GM13977 (cell line): ENCODE measurements at regions of chr15 and their contacts with region 1.

Region 1: DNA sequence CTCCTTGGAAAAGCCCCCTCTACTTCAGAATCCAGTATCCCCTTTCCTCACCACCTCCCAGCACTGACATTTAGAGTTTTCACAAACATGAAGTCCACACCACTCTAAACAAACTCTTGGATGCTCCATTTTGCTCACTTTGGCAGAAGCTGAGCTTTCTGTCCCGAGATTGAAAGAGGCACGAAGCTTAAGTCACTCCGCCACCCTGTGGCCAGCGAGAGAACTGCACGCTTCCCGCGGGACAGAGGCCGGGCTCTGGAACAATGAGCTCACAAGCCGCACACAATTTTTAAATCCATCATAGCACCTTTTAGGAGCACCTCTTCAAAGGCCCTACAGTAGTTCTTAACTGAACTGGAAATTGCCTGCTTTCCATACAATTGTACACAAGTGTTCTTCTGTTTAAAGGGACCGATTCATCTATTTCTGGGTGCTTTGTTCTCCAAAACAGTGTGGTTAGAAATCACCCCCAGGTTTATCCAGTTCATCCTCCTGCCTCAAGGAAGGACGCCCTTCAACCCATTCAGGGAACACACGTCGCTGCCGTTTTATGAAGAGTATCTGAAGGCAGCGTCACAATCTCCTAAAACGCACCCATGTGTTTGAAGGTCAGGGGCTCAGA is 226.1 kb downstream of the VPS13C start:
- DNase-seq: peak; percentile 73
- CTCF ChIP-seq: peak; percentile 97

Region 2: GRCh38 chr15:60592371-60593169 is 1241.6 kb before region 1 on chr15:
- in situ Hi-C with region 1: loop called (anchors 25 kb)
- DNase-seq: peak; percentile 88
- CTCF ChIP-seq: peak; percentile 38

Region 3: GRCh38 chr15:61169904-61170695 is 664.1 kb before region 1 on chr15:
- in situ Hi-C with region 1: loop called (anchors 10 kb)
- DNase-seq: no peak
- CTCF ChIP-seq: no peak